MCF 10A (cell line): ENCODE measurements at regions of chr11 and their contacts with region 1.

Region 1: GRCh38 chr11:83819933-83820549 is 533.9 kb upstream of the CCDC90B start:
- DNase-seq: peak; percentile 68
- H3K4me3 Mint-ChIP-seq: no peak overlapping the region
- H3K27ac Mint-ChIP-seq: no peak overlapping the region
- H3K4me1 Mint-ChIP-seq: no peaks in the 10 kb centered on the region
- H3K27me3 Mint-ChIP-seq: peaks cover 27% of the 10 kb centered on the region
- CTCF ChIP-seq: peak; percentile 58

Region 2: DNA sequence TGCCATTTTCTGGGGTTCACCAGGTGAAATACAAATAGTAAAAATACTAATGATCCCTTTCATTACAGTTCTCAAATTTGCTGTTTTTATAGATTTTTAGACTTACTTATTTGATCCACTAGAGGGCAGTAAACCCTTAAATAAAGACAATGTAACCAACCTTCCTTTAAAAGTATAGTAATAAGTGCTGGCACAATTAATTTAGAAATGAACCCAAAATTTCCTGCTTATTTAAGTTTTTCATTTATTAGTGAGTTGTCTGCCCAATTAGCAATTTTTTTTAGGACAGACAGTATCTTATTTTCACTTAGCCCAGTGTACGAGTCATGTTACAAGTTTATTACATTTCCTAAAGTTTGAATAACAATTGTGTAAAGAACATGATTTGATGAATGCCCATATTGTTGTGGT is 913.8 kb before region 1 on chr11:
- CTCF ChIA-PET with region 1: interaction called, 6 read pairs
- POLR2A ChIA-PET with region 1: no interaction called
- intact Hi-C with region 1: loop called (anchors 2 kb)
- DNase-seq: peak; percentile 40
- H3K4me3 Mint-ChIP-seq: peak overlapping the region; percentile 37
- H3K27ac Mint-ChIP-seq: peak overlapping the region; percentile 40
- H3K4me1 Mint-ChIP-seq: peaks cover 34% of the 10 kb centered on the region
- H3K27me3 Mint-ChIP-seq: no peaks in the 10 kb centered on the region
- CTCF ChIP-seq: peak; percentile 46

Region 3: DNA sequence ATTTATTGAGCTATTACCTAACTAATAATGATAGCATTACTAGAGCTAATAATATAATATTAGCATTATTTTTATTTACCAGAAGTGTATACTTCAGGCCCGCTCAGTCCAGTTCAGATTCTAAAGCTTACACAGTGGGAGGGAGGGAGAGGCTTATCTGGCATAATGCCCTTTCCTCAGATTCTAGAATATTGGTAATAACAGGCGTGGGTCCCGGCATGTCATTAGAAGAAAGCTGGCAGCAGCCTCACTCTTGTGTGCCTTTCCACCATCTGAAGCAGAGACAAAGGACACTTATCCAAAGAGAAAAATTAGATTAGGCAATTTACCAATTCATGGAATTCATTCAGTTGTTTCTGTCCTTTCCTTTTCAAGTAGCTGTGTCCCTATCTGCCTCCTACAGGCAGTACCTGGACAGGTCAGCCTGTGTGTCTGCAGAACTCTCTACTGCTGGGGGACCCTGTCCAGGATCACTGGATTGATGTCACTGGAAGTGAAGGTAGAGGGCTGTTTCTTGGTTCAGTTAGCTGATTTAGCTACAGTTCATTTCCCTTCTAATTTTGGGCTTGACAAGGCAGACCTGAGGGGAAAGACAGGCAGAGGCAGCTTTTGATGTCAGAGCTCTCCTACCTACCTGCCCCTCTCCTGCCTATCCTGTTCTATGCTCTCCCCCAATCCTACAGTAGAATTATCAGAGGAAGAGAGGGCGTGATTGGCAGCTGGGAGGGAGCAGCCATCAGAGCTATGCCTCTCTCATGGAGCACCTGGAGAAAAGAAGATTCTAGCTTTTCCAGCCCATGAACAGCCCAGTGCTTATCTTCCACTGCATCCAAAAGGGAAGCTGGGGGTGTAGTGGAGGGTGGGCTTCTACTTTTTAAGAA is 513.6 kb before region 1 on chr11:
- CTCF ChIA-PET with region 1: interaction called, 29 read pairs
- POLR2A ChIA-PET with region 1: no interaction called
- intact Hi-C with region 1: no loop called
- DNase-seq: no peak
- H3K4me3 Mint-ChIP-seq: no peak overlapping the region
- H3K27ac Mint-ChIP-seq: no peak overlapping the region
- H3K4me1 Mint-ChIP-seq: no peaks in the 10 kb centered on the region
- H3K27me3 Mint-ChIP-seq: peaks cover 6% of the 10 kb centered on the region
- CTCF ChIP-seq: no peak

Region 4: DNA sequence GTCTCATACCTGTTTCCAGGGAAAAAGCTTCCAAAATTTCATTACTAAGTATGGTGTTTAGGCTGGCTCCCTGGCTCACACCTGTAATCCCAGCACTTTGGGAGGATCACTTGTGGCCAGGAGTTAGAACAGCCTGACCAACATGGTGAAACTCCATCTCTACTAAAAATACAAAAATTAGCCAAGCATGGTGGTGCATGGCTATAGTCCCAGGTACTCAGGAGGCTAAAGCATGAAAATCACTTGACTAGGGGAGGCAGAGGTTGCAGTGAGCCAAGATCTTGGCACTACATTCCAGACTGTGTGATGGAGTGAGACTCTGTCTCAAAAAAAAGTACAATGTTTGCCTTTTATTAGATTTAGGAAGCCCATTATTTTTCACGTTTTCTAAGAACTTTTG is 202.4 kb before region 1 on chr11:
- CTCF ChIA-PET with region 1: no interaction called
- POLR2A ChIA-PET with region 1: no interaction called
- intact Hi-C with region 1: no loop called
- DNase-seq: no peak
- H3K4me3 Mint-ChIP-seq: no peak overlapping the region
- H3K27ac Mint-ChIP-seq: no peak overlapping the region
- H3K4me1 Mint-ChIP-seq: no peaks in the 10 kb centered on the region
- H3K27me3 Mint-ChIP-seq: peaks cover 21% of the 10 kb centered on the region
- CTCF ChIP-seq: no peak

Region 5: DNA sequence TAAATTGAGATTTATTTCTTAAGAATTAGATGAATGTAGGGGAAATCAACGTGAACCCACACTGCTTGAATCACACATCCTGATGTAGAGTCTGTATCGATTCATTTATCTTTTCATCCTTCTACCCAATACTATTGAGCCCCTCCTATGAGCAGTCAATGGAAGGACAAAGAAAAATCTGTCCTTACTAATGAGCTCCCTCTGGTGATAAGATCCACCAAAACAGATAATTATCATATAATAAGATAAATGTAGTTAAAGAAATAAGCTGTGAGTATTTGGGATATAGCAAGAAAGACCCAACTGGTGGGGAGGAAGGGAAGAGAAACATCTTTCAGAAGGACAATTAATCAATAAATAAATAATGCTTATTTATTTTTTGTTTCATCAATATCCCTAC is 148.8 kb before region 1 on chr11:
- CTCF ChIA-PET with region 1: interaction called, 3 read pairs
- POLR2A ChIA-PET with region 1: no interaction called
- intact Hi-C with region 1: loop called (anchors 2 kb)
- DNase-seq: peak; percentile 6
- H3K4me3 Mint-ChIP-seq: no peak overlapping the region
- H3K27ac Mint-ChIP-seq: no peak overlapping the region
- H3K4me1 Mint-ChIP-seq: no peaks in the 10 kb centered on the region
- H3K27me3 Mint-ChIP-seq: peaks cover 62% of the 10 kb centered on the region
- CTCF ChIP-seq: no peak